ENCODE measurements at regions of chr13 and their contacts with region 1.

Region 1: GRCh38 chr13:77492982-77493381 is 42.5 kb upstream of the SCEL start:
- DNase-seq: no peak
- CTCF ChIP-seq: peak; percentile 51

Region 2: GRCh38 chr13:77565635-77566034 is 72.7 kb after region 1 on chr13:
- in situ Hi-C with region 1: loop called (anchors 10 kb)
- DNase-seq: peak; percentile 36
- CTCF ChIP-seq: peak; percentile 41

Measured in GM13976 (cell line).